ENCODE measurements at regions of chr16 and their contacts with region 1.

Region 1: GRCh38 chr16:87765776-87766484 is at the start of gene KLHDC4:
- DNase-seq: no peak
- H3K4me3 ChIP-seq: peak within 1 kb of the TSS; percentile 82
- CTCF ChIP-seq: no peak

Region 2: GRCh38 chr16:87391950-87392822 is 373.7 kb before region 1 on chr16 and contains the start of gene MAP1LC3B:
- CTCF ChIA-PET with region 1: interaction called, 11 read pairs
- POLR2A ChIA-PET with region 1: no interaction called
- DNase-seq: peak; percentile 59
- H3K4me3 ChIP-seq: peak within 1 kb of the TSS; percentile 81
- CTCF ChIP-seq: no peak

Region 3: DNA sequence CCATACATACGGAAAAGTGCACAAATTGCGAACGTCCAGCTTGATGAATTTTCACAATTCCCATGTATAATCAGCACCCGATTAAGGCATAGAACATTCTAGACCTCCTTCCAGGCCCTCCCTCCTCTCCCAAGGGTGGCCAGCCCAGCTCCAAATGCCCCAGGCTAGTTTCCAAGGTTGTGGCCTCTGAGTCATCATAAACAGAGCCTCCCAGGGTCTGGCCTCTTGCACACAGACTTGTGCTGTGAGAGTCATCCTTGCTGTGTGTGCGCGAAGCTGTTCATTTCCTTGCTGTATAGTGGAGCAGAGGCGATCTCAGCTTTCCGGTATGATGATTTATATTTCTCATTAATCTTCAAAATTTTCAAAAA is 184.1 kb before region 1 on chr16:
- CTCF ChIA-PET with region 1: interaction called, 45 read pairs
- POLR2A ChIA-PET with region 1: interaction called, 3 read pairs
- DNase-seq: peak; percentile 87
- H3K4me3 ChIP-seq: no peak overlapping the region
- CTCF ChIP-seq: no peak

Region 4: GRCh38 chr16:87877938-87878507 is 112.1 kb after region 1 on chr16:
- CTCF ChIA-PET with region 1: interaction called, 19 read pairs
- POLR2A ChIA-PET with region 1: no interaction called
- DNase-seq: no peak
- H3K4me3 ChIP-seq: no peak overlapping the region
- CTCF ChIP-seq: peak; percentile 3

Region 5: GRCh38 chr16:88132836-88133506 is 367.0 kb after region 1 on chr16:
- CTCF ChIA-PET with region 1: no interaction called
- POLR2A ChIA-PET with region 1: no interaction called
- DNase-seq: no peak
- H3K4me3 ChIP-seq: no peak overlapping the region
- CTCF ChIP-seq: no peak